Activated T-helper 2 cell treated with anti-CD3 and anti-CD28 coated beads, Interferon-gamma antibody, Interleukin-2, Interleukin-4, amounts not matched to agents 10 μg/mL and 5 μg/mL and 100 μg/mL, durations not matched to agents 14 hours and 24 hours and 36 hours (primary cell): ENCODE measurements at regions of chr3 and their contacts with region 1.

Region 1: DNA sequence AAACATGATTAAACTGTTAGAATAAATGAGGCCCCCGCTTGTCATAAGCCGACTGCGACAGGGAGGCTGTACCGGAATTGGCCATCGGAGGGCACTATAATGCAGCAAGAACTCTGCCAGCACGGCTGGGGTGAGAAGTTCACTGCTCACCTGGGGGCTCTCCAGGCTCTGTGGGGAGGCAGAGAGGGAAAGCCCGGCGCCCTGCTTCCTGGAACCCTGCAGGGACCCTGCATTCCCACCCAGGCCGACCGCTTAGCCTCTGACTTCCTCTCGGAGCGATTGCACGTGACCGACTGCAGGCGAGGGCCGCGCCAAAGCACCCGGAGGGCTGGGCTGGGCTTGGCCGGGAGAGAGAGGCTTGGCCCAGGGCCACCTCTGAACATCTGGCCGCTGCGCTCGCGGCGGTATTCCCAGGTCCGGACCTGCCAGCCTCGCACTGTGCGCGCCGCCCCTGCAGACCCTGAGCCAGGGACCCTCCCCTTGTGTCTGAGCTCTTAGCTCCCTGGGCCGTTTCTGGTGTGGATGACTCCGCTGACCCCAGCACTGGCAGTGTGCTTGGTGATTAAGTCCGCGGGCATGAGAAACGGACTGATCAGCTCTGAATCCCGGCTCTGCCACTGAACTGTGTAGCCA is 26.2 kb downstream of the DRD3 start:
- DNase-seq: peak; percentile 63
- H3K4me3 Mint-ChIP-seq: peak overlapping the region; percentile 11
- H3K27ac Mint-ChIP-seq: no peak overlapping the region
- H3K4me1 Mint-ChIP-seq: peaks cover 3% of the 10 kb centered on the region
- H3K27me3 Mint-ChIP-seq: peaks cover 2% of the 10 kb centered on the region

Region 2: GRCh38 chr3:113736548-113737089 is 416.0 kb before region 1 on chr3:
- intact Hi-C with region 1: loop called (anchors 10 kb)
- DNase-seq: no peak
- H3K4me3 Mint-ChIP-seq: no peak overlapping the region
- H3K27ac Mint-ChIP-seq: no peak overlapping the region
- H3K4me1 Mint-ChIP-seq: peaks cover 47% of the 10 kb centered on the region
- H3K27me3 Mint-ChIP-seq: no peaks in the 10 kb centered on the region

Region 3: DNA sequence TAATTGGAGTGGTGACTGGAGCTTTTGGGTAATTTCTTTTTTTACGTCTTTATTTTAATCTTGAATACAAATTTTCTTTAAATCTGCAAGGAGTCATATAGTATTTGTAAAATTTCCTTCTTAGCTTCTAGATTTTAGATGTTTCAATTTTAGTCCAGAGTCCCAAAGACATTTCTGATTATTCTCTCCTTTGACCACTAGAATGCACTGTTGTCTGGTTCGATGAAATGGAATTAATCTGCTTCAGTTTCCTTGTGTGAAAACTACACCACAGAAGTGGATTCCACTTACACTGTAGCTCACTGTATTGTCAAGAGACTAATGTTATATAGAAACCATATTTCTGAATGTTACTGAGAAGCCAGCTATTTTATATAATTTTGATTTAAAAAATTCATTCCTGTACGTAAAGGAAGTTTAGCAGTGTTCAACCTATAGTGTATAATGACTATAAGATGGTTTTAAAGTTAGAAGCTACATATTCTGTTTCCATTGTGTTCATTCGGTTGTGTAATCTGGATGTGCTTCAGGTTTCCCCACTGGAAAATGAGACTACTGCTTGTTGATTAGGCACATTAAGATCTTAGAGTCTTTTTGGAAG is 307.9 kb before region 1 on chr3:
- intact Hi-C with region 1: loop called (anchors 10 kb)
- DNase-seq: no peak
- H3K4me3 Mint-ChIP-seq: no peak overlapping the region
- H3K27ac Mint-ChIP-seq: no peak overlapping the region
- H3K4me1 Mint-ChIP-seq: no peaks in the 10 kb centered on the region
- H3K27me3 Mint-ChIP-seq: peaks cover 2% of the 10 kb centered on the region

Region 4: GRCh38 chr3:114290911-114291901 is 138.6 kb after region 1 on chr3:
- intact Hi-C with region 1: loop called (anchors 2 kb)
- DNase-seq: peak; percentile 69
- H3K4me3 Mint-ChIP-seq: peak overlapping the region; percentile 13
- H3K27ac Mint-ChIP-seq: peak overlapping the region; percentile 84
- H3K4me1 Mint-ChIP-seq: peaks cover 31% of the 10 kb centered on the region
- H3K27me3 Mint-ChIP-seq: no peaks in the 10 kb centered on the region

Region 5: GRCh38 chr3:114299421-114299820 is 146.8 kb after region 1 on chr3:
- intact Hi-C with region 1: loop called (anchors 2 kb)
- DNase-seq: no peak
- H3K4me3 Mint-ChIP-seq: no peak overlapping the region
- H3K27ac Mint-ChIP-seq: no peak overlapping the region
- H3K4me1 Mint-ChIP-seq: peaks cover 18% of the 10 kb centered on the region
- H3K27me3 Mint-ChIP-seq: peaks cover 2% of the 10 kb centered on the region

Region 6: DNA sequence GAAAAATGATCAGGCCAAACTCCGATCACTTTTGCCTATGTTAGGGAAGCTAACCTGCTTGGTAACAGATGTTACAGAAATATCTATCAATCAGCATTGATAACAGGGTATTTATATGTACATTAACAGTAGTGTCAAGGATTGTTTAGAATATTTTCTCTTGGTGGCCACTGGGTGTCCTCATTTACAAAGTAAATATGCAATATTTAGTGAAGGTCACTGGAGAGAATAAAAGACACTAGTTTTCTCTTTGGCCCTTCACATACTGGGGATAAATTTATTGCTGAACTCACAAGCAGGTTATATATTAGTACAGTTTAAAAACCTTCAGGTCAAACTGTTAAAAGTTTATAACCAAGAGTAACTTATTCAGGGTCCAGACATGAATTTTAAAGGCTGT is 210.2 kb after region 1 on chr3:
- intact Hi-C with region 1: loop called (anchors 5 kb)
- DNase-seq: no peak
- H3K4me3 Mint-ChIP-seq: no peak overlapping the region
- H3K27ac Mint-ChIP-seq: no peak overlapping the region
- H3K4me1 Mint-ChIP-seq: peaks cover 14% of the 10 kb centered on the region
- H3K27me3 Mint-ChIP-seq: no peaks in the 10 kb centered on the region